WTC11 (cell line): ENCODE measurements at regions of chr7 and their contacts with region 1.

Region 1: DNA sequence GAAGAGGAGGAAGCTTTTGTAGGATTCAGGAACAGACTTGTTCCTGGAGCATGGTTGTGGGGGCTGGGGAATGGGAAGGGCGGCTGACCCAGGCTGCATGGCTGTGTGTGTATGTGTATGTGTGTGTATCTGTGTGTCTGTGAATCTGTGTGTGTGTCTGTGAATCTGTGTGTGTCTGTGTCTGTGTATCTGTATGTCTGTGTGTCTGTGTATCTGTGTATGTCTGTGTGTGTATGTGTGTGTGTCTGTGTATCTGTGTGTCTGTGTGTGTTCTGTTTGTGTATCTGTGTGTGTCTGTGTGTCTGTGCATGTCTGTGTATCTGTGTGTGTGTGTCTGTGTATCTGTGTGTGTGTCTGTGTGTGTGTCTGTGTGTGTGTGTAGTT is 6.6 kb upstream of the STX1A start:
- DNase-seq: no peak
- ATAC-seq: peak; percentile 8; the same call in 1 of the 2 replicates
- H3K4me3 Mint-ChIP-seq: no peak overlapping the region
- H3K27ac Mint-ChIP-seq: no peak overlapping the region
- H3K4me1 Mint-ChIP-seq: peaks cover 13% of the 10 kb centered on the region
- H3K27me3 Mint-ChIP-seq: peaks cover 15% of the 10 kb centered on the region
- CTCF ChIP-seq: no peak; the same call in 1 of the 2 replicates

Region 2: DNA sequence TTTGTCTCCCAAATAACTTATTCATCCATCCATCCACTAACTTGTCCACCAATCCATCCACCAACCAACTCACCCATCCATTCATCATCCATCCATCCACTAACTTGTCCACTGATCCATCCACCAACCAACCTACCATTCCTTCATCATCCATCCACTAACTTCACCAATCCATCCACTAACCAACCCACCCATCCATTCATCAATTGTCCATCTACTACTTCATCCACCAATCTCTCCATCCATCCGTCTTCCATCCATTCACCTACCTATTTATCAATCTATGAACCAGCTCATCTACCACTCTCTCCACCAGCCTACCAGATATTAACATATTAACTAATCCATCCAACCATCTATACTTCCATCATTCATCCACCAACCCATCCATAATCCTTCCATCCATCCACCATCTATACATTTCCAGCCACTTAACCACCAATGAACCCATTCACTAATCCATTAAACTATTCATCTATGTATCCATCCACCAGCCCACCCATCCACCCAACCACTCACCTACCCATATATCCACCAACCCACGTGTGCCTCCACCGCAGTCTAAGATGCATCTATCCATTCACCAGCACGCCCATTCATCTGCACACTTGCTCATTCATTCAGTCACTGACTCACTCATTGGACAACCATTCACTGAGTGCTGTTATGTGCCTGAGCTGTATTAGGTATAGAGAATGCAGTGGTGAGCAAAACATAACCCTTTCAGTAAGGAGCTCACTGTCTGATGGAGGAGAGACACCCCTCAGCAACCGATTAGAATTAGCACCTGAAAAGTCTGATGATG is 127.9 kb before region 1 on chr7:
- CTCF ChIA-PET with region 1: interaction called, 113 read pairs
- POLR2A ChIA-PET with region 1: no interaction called
- DNase-seq: no peak
- ATAC-seq: no peak
- H3K4me3 Mint-ChIP-seq: no peak overlapping the region
- H3K27ac Mint-ChIP-seq: no peak overlapping the region
- H3K4me1 Mint-ChIP-seq: 0 out of 2 replicates have a peak, but pooled peaks cover 2% of the 10 kb centered on the region
- H3K27me3 Mint-ChIP-seq: peaks cover 18% of the 10 kb centered on the region
- CTCF ChIP-seq: no peak

Region 3: DNA sequence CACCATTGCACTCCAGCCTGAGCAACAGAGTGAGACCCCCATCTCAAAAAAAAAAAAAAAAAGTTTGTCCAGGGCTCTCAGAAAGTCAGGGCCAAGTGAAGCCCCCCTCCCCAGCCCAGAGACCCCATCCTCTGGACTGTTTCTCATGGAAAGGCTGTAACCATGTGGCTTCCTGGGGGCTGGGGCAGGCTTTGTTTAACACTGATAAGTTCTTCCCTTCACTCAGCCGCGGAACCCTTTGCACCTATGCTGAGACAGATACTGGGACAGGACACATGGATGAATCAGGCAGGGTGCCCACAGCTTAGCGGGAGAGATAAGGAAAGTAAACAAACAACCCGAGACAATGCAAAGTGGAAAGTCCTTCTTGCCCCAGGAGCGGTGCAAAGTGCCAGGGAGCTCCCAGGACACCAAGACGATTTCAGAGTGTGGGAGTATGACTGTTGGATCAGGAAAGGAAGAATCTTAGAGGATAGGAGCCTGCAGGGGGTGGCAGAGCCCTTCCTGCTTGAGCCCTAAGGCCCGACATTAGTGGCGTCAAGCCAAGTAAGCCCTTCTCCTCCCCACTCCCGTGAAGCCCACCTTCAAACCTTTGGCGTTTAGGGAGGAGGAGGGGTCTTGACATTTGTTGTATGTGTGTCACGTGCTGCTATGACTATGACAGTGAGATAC is 113.3 kb before region 1 on chr7:
- CTCF ChIA-PET with region 1: interaction called, 113 read pairs
- POLR2A ChIA-PET with region 1: interaction called, 6 read pairs
- DNase-seq: no peak
- ATAC-seq: peak; percentile 48
- H3K4me3 Mint-ChIP-seq: no peak overlapping the region
- H3K27ac Mint-ChIP-seq: peak overlapping the region; percentile 83
- H3K4me1 Mint-ChIP-seq: peaks cover 6% of the 10 kb centered on the region
- H3K27me3 Mint-ChIP-seq: no peaks in the 10 kb centered on the region; the same call in 1 of the 2 replicates
- CTCF ChIP-seq: no peak

Region 4: DNA sequence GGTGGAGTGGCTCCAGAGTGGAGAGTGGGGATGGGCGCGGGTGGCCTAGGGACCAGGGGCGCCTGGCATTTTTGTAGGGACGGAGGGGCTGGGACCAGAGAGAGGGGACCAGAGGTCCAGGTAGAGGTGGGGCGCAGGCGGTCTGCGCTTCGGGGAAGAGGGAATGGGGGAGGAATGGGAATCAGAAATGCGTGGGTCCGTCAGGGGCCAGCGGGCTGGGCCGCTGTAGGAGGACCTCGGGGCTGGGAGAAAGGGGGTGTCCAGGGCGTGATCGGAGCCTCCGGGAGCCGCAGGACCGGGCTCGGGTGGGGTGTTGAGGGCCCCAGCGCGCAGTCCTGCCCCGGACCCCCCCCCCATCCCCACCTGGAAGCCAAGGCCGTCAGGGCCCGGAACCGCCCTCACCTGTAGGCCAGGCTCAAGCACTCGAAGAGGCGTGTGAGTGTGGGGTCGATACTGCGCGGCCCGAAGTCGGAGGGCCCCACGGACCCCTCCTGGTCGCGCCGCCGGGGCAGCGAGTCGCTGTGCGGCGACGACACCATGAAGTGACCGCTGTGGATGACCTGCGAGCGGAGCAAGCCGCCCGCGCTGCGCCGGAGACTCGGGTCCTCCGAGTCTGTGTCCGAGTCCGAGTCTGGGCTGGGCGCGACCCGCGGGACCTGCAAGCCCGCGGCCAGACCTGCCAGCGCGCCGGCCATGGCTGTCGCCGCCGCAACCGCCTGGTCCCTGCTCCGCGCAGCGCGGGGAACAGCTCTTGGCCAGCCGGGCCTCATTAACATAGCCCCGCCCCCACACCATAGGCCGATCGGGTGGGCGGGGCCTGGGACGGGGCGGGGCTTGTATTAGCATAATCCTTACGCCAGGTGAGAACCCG is 102.0 kb before region 1 on chr7 and contains the start of gene MLXIPL:
- CTCF ChIA-PET with region 1: interaction called, 10 read pairs
- POLR2A ChIA-PET with region 1: interaction called, 5 read pairs
- DNase-seq: peak; percentile 96
- ATAC-seq: peak; percentile 89
- H3K4me3 Mint-ChIP-seq: peak within 1 kb of the TSS; percentile 83
- H3K27ac Mint-ChIP-seq: no peak within 1 kb of the TSS; the same call in 1 of the 2 replicates
- H3K4me1 Mint-ChIP-seq: peaks cover 7% of the 10 kb centered on the region
- H3K27me3 Mint-ChIP-seq: peaks cover 37% of the 10 kb centered on the region
- CTCF ChIP-seq: no peak
- total RNA-seq, gene MLXIPL: 20.4 to 26.6 TPM (median 23.8 TPM) in 3 replicates

Region 5: DNA sequence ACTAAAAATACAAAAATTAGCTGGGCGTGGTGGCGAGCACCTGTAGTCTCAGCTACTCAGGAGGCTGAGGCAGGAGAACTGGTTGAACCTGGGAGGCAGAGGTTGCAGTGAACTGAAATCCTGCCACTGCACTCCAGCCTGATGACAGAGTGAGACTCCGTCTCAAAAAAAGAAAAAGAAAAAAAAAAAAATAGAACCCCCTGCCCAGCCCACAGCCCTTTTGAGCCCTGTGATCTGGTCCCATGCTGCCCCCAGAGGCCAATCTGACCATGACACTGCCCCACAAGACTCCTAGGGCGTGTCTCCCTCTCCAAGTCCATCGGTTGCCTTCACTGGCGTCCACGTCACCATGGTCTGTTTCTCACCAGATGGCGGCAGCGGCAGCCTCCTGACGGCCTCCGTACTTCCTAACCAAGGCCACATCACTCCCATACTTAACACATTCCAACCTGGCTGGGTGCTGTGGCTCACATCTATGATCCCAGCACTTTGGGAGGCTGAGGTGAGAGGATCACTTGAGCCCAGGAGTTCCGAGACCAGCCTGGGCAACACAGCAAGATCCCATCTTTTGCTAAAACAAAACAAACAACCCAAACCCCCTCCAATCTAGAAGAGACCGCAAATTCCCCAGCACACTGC is 24.6 kb before region 1 on chr7:
- CTCF ChIA-PET with region 1: interaction called, 42 read pairs
- POLR2A ChIA-PET with region 1: no interaction called
- DNase-seq: peak; percentile 87
- ATAC-seq: peak; percentile 75
- H3K4me3 Mint-ChIP-seq: peak overlapping the region; percentile 24; the same call in 1 of the 2 replicates
- H3K27ac Mint-ChIP-seq: peak overlapping the region; percentile 63; the same call in 1 of the 2 replicates
- H3K4me1 Mint-ChIP-seq: peaks cover 15% of the 10 kb centered on the region
- H3K27me3 Mint-ChIP-seq: no peaks in the 10 kb centered on the region
- CTCF ChIP-seq: peak; percentile 62

Region 6: DNA sequence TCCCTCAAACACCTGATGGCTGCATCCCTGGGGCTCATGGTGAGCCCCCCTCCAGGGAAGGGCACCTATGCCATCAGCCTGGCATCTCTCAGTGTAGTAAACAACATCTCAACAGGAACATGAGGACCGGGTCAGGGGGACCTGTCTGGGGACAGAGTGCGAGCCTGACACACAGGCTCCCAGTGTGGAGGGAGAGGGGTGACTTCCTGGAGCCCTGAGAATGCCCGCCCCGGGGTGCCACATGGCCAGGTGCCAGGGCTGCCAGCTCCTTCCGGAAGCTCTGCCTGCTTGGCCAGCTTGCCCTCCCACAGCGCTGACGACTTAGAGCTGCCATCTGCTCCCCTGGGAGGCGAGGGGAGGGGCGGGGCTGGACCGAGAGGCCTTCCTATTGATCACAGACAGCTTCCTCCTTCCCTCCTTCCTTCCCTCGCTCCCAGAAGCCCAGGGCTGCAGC is 18.9 kb before region 1 on chr7:
- CTCF ChIA-PET with region 1: interaction called, 42 read pairs
- POLR2A ChIA-PET with region 1: interaction called, 3 read pairs
- DNase-seq: no peak
- ATAC-seq: no peak
- H3K4me3 Mint-ChIP-seq: no peak overlapping the region
- H3K27ac Mint-ChIP-seq: no peak overlapping the region
- H3K4me1 Mint-ChIP-seq: peaks cover 12% of the 10 kb centered on the region
- H3K27me3 Mint-ChIP-seq: no peaks in the 10 kb centered on the region
- CTCF ChIP-seq: no peak

Region 7: GRCh38 chr7:74070619-74070921 is 344.5 kb after region 1 on chr7:
- CTCF ChIA-PET with region 1: no interaction called
- POLR2A ChIA-PET with region 1: no interaction called
- DNase-seq: no peak
- ATAC-seq: no peak
- H3K4me3 Mint-ChIP-seq: no peak overlapping the region
- H3K27ac Mint-ChIP-seq: no peak overlapping the region
- H3K4me1 Mint-ChIP-seq: 0 out of 2 replicates have a peak, but pooled peaks cover 2% of the 10 kb centered on the region
- H3K27me3 Mint-ChIP-seq: no peaks in the 10 kb centered on the region
- CTCF ChIP-seq: no peak